ENCODE measurements at regions of chr20 and their contacts with region 1.

Region 1: DNA sequence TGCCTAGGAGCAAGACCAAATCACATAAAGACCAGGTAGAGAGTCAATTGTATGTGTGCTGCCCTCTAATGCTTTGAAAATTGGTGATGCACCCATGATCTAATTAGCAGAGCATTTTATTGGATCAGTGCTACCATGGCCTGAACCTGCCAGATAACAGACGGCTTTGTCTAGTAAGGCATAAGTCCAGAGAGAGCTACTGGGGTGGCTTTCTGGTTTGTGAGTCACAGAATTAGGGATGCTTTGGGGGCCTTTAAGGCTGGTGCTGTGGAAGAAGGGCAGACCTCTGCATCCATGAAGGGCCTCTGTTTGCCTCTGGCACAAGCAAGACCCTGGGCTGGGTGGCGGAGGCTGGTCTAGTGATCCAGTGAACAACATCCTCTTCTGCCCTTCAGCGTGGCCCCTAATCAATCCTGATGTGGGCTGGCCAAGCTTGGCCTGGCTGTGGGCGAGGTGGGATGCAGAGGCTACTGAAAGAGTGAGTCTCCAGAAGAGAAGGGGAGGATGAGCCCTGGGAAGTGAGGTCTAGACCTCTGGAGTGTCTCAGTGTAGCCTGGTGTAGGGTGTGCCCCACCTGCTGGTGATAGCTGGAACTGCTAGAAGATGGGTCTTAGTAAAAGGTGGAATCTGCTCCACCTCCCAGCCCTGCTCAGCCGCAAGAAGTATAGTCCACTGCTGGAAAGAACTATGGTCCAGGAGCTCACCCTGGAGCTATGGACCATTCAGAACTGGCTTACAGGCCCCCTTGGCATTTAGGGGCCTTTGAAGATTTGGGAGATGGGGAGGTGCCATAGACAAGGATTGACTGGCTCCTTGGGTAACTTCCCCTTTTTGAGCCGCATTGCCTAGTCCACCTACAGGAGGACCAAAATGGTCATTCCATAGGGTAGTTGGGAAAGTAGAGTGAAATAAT is 36.7 kb upstream of the AAR2 start:
- DNase-seq: peak; percentile 66
- H3K4me3 ChIP-seq: no peak overlapping the region
- H3K27ac ChIP-seq: no peak overlapping the region
- H3K4me1 ChIP-seq: no peaks in the 10 kb centered on the region
- H3K27me3 ChIP-seq: peaks cover 0 to 4% of the 10 kb centered on the region in 2 experiments
- CTCF ChIP-seq: peak; percentile 86 to 91
- POLR2A ChIP-seq: no peak

Region 2: GRCh38 chr20:35741892-35742740 is 457.5 kb before region 1 on chr20 and contains the start of gene RBM39:
- CTCF ChIA-PET with region 1: no interaction called
- POLR2A ChIA-PET with region 1: no interaction called
- dilution Hi-C with region 1: no loop called
- intact Hi-C with region 1: no loop called
- DNase-seq: peak; percentile 100
- H3K4me3 ChIP-seq: peak within 1 kb of the TSS; percentile 97 to 100 (median 99)
- H3K27ac ChIP-seq: peak within 1 kb of the TSS; percentile 97
- H3K4me1 ChIP-seq: peaks cover 39% of the 10 kb centered on the region
- H3K27me3 ChIP-seq: no peaks in the 10 kb centered on the region
- CTCF ChIP-seq: peak; percentile 21 to 58
- POLR2A ChIP-seq: peak; percentile 89
- total RNA-seq, gene RBM39: 291 and 309 TPM in 2 replicates

Region 3: DNA sequence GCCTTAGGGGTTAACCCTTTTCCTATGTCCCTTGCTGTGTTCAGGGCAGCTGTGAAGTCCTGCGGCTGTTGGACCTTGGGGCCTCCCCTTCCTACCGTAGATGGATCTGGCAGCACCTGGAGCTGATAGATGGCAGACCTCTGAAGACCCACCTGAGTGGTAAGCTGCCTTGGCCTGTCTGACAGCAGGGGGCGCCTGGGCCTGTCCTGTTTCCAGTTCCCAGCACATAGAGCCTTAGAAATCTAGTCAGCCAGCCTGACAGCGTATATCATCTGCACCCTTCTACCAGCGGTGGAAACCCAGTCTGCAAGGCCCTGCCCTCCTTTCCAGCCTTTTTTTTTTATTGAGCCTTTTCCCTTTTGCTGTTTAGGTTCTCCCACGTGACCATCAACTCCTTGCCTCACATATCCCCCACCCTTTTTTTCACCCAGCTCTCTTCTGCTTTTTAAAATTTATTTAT is 204.6 kb before region 1 on chr20:
- CTCF ChIA-PET with region 1: interaction called, 67 read pairs
- POLR2A ChIA-PET with region 1: no interaction called
- dilution Hi-C with region 1: no loop called
- intact Hi-C with region 1: loop called (anchors 1 kb)
- DNase-seq: peak; percentile 85
- H3K4me3 ChIP-seq: no peak overlapping the region
- H3K27ac ChIP-seq: no peak overlapping the region
- H3K4me1 ChIP-seq: no peaks in the 10 kb centered on the region
- H3K27me3 ChIP-seq: peaks cover 0 to under 1% of the 10 kb centered on the region in 2 experiments
- CTCF ChIP-seq: peak; percentile 89 to 93
- POLR2A ChIP-seq: no peak

Region 4: DNA sequence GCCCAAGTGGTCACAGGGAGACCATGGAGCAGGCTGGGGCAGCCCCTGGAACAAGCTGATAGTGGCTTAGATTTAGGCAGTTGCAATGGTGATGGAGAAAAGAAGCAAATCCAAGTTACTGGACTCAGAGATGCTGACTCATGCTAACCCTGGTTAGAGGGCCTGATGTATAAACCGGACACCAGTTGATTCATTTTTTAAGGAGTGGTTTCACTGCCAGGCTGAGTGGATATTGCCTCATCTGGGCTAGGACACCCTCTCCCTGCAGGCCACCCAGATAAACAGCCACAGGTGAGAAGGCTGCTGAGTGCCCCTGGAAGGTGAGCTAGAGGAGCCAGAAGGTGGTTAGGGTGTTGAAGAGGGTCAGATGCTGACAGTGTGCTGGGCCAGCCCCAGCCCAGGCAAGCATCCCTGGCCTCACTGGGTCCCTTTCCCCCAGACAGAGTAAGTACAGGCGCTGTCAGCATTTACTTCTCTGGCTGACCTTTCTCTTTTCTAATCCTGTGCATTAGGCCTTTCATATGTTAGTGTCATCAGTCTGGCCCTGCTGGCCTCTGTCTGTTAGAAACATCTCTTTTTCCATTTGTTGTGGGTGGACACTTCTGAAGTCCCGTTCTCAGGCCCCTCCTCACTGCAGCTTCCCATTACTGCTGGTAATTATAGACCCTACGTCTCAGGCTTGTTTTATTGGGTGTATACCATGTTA is 31.6 kb before region 1 on chr20:
- CTCF ChIA-PET with region 1: interaction called, 197 read pairs
- POLR2A ChIA-PET with region 1: no interaction called
- dilution Hi-C with region 1: no loop called
- intact Hi-C with region 1: no loop called
- DNase-seq: no peak
- H3K4me3 ChIP-seq: no peak overlapping the region
- H3K27ac ChIP-seq: no peak overlapping the region
- H3K4me1 ChIP-seq: no peaks in the 10 kb centered on the region
- H3K27me3 ChIP-seq: no peaks in the 10 kb centered on the region
- CTCF ChIP-seq: no peak
- POLR2A ChIP-seq: no peak

Region 5: GRCh38 chr20:36228770-36229169 is 29.2 kb after region 1 on chr20:
- CTCF ChIA-PET with region 1: interaction called, 19 read pairs
- POLR2A ChIA-PET with region 1: no interaction called
- dilution Hi-C with region 1: no loop called
- intact Hi-C with region 1: no loop called
- DNase-seq: no peak
- H3K4me3 ChIP-seq: no peak overlapping the region
- H3K27ac ChIP-seq: no peak overlapping the region
- H3K4me1 ChIP-seq: no peaks in the 10 kb centered on the region
- H3K27me3 ChIP-seq: peaks cover 2 to 5% of the 10 kb centered on the region in 2 experiments
- CTCF ChIP-seq: no peak
- POLR2A ChIP-seq: no peak

Region 6: DNA sequence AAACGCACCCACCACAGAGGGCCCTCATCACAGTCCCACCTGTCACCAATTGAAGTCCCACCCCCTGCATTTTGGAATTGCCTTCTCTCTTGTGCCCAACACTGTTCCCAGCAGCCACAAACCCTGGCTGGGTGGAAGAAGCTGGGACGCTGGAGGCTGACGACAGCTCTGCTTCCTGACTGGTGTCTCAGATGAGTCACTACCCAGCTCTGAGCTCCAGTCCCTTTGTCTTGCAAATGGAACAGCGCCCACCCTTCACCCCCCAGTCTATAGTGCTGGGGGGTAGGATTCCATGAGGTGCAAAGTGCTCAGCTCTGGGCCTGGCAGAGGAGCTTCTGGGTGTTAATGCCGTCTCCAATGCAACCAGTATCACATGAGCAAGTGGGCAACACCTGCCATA is 191.9 kb after region 1 on chr20:
- CTCF ChIA-PET with region 1: interaction called, 10 read pairs
- POLR2A ChIA-PET with region 1: no interaction called
- dilution Hi-C with region 1: no loop called
- intact Hi-C with region 1: no loop called
- DNase-seq: no peak
- H3K4me3 ChIP-seq: no peak overlapping the region
- H3K27ac ChIP-seq: no peak overlapping the region
- H3K4me1 ChIP-seq: no peaks in the 10 kb centered on the region
- H3K27me3 ChIP-seq: peaks cover 0 to 3% of the 10 kb centered on the region in 2 experiments
- CTCF ChIP-seq: no peak
- POLR2A ChIP-seq: no peak

Region 7: DNA sequence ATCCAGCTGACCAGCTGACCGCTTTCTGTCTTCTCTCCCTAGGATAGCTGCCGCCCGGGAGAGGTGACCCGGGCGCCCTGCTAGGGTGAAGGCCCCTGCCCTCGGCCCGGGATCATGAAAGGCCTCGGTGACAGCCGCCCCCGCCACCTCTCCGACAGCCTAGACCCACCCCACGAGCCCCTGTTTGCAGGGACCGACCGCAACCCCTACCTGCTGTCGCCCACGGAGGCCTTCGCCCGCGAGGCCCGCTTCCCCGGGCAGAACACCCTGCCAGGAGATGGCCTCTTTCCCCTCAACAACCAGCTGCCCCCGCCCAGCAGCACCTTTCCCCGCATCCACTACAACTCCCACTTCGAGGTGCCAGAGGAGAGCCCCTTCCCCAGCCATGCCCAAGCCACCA is 232.0 kb after region 1 on chr20:
- CTCF ChIA-PET with region 1: interaction called, 203 read pairs
- POLR2A ChIA-PET with region 1: no interaction called
- dilution Hi-C with region 1: no loop called
- intact Hi-C with region 1: no loop called
- DNase-seq: no peak
- H3K4me3 ChIP-seq: no peak overlapping the region
- H3K27ac ChIP-seq: no peak overlapping the region
- H3K4me1 ChIP-seq: no peaks in the 10 kb centered on the region
- H3K27me3 ChIP-seq: no peaks in the 10 kb centered on the region
- CTCF ChIP-seq: no peak
- POLR2A ChIP-seq: no peak

Region 8: DNA sequence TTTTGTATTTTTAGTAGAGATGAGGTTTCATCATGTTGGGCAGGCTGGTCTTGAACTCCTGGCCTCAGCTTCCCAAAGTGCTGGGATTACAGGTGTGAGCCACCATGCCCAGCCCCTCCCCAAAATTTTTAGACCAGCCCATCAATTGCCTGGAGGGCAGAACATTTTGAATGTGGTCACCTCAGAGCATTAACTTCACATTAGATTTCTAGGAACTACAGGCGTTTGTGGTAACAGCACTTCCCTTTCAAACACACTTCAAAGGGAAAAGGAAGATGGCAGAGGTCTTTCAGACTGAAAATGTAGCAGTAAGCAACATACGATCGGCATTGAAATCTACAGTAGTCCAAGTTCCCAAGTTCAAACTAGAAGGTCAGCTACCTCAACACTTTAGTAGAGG is 458.7 kb after region 1 on chr20:
- CTCF ChIA-PET with region 1: no interaction called
- POLR2A ChIA-PET with region 1: no interaction called
- dilution Hi-C with region 1: no loop called
- intact Hi-C with region 1: no loop called
- DNase-seq: no peak
- H3K4me3 ChIP-seq: no peak overlapping the region
- H3K27ac ChIP-seq: no peak overlapping the region
- H3K4me1 ChIP-seq: no peaks in the 10 kb centered on the region
- H3K27me3 ChIP-seq: no peaks in the 10 kb centered on the region
- CTCF ChIP-seq: no peak
- POLR2A ChIP-seq: no peak

Measured in endothelial cell of umbilical vein (primary cell).